ENCODE measurements at regions of chr18 and their contacts with region 1.

Region 1: GRCh38 chr18:2948038-2948437 is 64.9 kb downstream of the LPIN2 start:
- DNase-seq: peak in 2 of 5 donors; percentile 40 to 61
- ATAC-seq: peak; percentile 87 to 97 (median 92)
- H3K4me3 ChIP-seq: no peak overlapping the region
- H3K27ac ChIP-seq: no peak overlapping the region
- H3K4me1 ChIP-seq: peaks cover 0 to 7% (median 1%) of the 10 kb centered on the region in 12 donors
- H3K27me3 ChIP-seq: no peaks in the 10 kb centered on the region
- CTCF ChIP-seq: peak in 8 of 12 donors; percentile 11 to 45 (median 31)
- POLR2A ChIP-seq: no peak

Region 2: GRCh38 chr18:2978646-2979045 is 30.6 kb after region 1 on chr18:
- intact Hi-C with region 1: loop called in 2 of 10 experiments (anchors 5 kb)
- DNase-seq: no peak
- ATAC-seq: peak in 3 of 4 donors; percentile 31 to 50 (median 33)
- H3K4me3 ChIP-seq: peak overlapping the region in 4 of 12 donors; percentile 13 to 35 (median 24)
- H3K27ac ChIP-seq: peak overlapping the region in 10 of 12 donors; percentile 4 to 90 (median 46)
- H3K4me1 ChIP-seq: peaks cover 6 to 92% (median 53%) of the 10 kb centered on the region in 12 donors
- H3K27me3 ChIP-seq: no peaks in the 10 kb centered on the region
- CTCF ChIP-seq: no peak
- POLR2A ChIP-seq: no peak

Region 3: GRCh38 chr18:3002732-3003131 is 54.7 kb after region 1 on chr18:
- intact Hi-C with region 1: no loop called
- DNase-seq: no peak
- ATAC-seq: no peak
- H3K4me3 ChIP-seq: no peak overlapping the region
- H3K27ac ChIP-seq: no peak overlapping the region
- H3K4me1 ChIP-seq: peaks cover 7 to 27% (median 18%) of the 10 kb centered on the region in 12 donors
- H3K27me3 ChIP-seq: no peaks in the 10 kb centered on the region
- CTCF ChIP-seq: no peak
- POLR2A ChIP-seq: no peak

Region 4: DNA sequence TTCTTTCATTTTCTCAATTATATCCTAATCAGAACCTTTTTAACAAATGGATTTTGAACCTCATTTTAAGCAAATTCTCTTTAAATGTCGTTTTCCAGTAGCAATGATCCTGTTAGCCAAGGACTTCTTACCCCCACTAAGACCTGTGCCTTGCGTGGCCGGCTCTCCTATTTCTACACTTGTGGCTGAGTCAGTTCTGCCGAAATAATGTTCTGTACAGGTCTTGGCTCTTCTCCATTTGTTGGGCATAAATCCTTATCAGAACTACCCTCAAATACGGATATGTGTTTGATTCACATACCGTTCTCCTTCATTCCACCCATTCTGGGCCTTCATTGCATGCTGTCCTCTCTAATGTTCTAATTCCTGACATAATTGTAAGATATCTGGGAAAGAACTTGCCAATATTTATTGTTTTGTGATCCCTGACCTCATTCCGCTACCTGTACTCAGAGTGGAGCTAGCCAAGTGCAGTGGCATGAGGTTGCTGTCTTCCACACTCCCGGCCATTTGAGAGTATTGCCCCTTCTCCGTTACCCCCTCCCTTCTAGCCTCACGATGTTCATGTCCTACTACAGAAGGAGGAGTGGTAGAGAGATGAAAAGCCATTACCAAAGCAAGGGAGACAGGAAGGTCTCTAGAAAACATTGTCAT is 193.1 kb after region 1 on chr18:
- intact Hi-C with region 1: loop called in 1 of 10 experiments (anchors 5 kb)
- DNase-seq: peak in 1 of 5 donors; percentile 64
- ATAC-seq: peak; percentile 39 to 72 (median 57)
- H3K4me3 ChIP-seq: no peak overlapping the region
- H3K27ac ChIP-seq: peak overlapping the region in 11 of 12 donors; percentile 26 to 86 (median 58)
- H3K4me1 ChIP-seq: peaks cover 0 to 40% (median 2%) of the 10 kb centered on the region in 12 donors
- H3K27me3 ChIP-seq: no peaks in the 10 kb centered on the region
- CTCF ChIP-seq: no peak
- POLR2A ChIP-seq: no peak

Region 5: DNA sequence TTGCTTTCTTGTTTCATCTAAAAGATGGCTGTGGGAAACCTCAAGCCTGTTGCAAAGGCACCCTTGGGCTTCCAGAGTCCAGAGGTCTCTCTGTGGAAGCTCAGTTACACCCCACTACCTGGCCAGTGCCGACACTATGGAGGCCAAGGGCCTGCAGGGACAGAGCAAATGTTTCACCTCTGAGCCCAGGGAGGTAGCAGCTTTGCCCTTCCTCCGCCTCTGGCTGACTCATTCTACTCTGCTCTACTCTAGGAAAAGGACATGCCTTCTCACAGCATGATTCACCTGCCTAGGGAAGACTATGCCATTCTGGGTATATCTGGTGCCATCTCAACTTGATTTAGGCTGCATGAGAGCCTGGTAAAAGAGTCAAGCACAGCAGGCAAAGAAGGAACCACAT is 259.5 kb after region 1 on chr18:
- intact Hi-C with region 1: no loop called
- DNase-seq: no peak
- ATAC-seq: peak; percentile 33 to 87 (median 63)
- H3K4me3 ChIP-seq: peak overlapping the region in 1 of 12 donors; percentile 16
- H3K27ac ChIP-seq: peak overlapping the region in 10 of 12 donors; percentile 3 to 76 (median 36)
- H3K4me1 ChIP-seq: peaks cover 0 to 45% (median 24%) of the 10 kb centered on the region in 12 donors
- H3K27me3 ChIP-seq: no peaks in the 10 kb centered on the region
- CTCF ChIP-seq: no peak
- POLR2A ChIP-seq: no peak